GM10248 (cell line): ENCODE measurements at regions of chr6 and their contacts with region 1.

Region 1: DNA sequence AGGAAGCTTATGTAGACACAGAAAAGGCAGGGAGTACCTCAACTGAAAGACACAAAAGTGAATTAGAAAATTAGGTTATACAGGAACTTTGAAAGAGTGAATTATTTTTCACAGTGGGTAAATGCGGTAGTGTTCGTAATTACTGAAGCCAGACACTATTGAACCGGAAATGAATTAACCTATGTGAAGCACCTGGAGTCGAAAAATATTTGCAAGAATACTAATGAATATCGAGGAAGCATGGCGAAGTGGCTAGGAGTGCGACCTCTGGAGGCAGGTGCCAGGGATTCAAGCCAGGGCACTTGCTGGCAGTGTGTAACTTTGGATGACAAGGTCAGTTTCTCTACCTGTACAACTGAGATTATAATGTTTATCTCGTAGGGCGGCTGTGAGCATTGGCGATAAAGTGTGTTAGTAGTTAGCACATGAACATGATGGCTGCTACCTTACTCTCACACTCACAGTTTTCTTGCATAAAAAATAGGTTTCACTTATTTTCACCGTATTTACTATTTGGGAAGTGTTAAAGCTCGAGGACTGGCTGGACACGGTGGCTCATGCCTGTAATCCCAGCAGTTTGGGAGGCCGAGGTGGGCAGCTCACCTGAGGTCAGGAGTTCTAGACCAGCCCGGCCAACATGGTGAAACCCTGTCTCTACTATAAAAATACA is 567 bp upstream of the SLC18B1 start:
- DNase-seq: peak; percentile 75
- CTCF ChIP-seq: peak; percentile 69

Region 2: GRCh38 chr6:132669690-132670291 is 129.2 kb before region 1 on chr6:
- CTCF ChIA-PET with region 1: interaction called, 31 read pairs
- POLR2A ChIA-PET with region 1: no interaction called
- DNase-seq: peak; percentile 29
- CTCF ChIP-seq: peak; percentile 36

Region 3: GRCh38 chr6:132780770-132781371 is 18.1 kb before region 1 on chr6:
- CTCF ChIA-PET with region 1: interaction called, 16 read pairs
- POLR2A ChIA-PET with region 1: no interaction called
- DNase-seq: no peak
- CTCF ChIP-seq: no peak

Region 4: DNA sequence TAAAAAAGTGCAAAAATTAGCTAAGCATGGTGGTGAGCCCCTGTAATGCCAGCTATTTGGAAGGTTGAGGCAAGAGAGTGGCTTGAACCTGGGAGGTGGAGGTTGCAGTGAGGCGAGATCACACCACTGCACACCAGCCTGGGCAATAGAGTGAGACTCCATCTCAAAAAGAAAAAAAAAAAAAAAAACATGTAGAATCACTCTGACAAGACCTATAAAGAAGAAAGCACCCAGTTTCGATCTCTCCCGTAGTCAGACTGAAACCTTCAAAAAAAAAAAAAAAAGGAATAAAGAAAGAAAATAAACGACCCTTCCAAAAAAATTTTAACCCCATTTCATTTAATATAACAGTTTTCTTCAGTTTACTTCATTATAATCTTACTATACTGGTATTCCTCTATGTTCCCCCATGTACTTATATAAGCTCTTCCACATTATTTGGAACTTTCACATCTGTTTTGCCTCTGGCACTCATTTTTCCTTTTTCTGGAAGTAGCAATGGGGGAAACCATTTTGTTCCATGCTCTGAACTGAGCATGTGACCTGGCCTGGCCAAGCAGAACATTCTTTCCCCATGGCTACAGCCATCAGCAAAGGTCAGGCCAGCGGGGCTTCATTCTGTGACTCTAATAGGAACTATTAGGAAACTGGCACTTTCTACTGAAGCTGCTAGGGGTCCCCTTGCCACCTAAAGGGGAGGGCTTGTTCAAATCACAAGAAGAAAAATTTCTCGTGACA is 10.2 kb before region 1 on chr6:
- CTCF ChIA-PET with region 1: interaction called, 16 read pairs
- POLR2A ChIA-PET with region 1: no interaction called
- DNase-seq: no peak
- CTCF ChIP-seq: no peak

Region 5: GRCh38 chr6:132813173-132813856 is 14.3 kb after region 1 on chr6:
- CTCF ChIA-PET with region 1: interaction called, 101 read pairs
- POLR2A ChIA-PET with region 1: interaction called, 4 read pairs
- DNase-seq: peak; percentile 43
- CTCF ChIP-seq: no peak

Region 6: GRCh38 chr6:132843316-132844043 is 44.5 kb after region 1 on chr6:
- CTCF ChIA-PET with region 1: no interaction called
- POLR2A ChIA-PET with region 1: no interaction called
- DNase-seq: no peak
- CTCF ChIP-seq: no peak

Region 7: DNA sequence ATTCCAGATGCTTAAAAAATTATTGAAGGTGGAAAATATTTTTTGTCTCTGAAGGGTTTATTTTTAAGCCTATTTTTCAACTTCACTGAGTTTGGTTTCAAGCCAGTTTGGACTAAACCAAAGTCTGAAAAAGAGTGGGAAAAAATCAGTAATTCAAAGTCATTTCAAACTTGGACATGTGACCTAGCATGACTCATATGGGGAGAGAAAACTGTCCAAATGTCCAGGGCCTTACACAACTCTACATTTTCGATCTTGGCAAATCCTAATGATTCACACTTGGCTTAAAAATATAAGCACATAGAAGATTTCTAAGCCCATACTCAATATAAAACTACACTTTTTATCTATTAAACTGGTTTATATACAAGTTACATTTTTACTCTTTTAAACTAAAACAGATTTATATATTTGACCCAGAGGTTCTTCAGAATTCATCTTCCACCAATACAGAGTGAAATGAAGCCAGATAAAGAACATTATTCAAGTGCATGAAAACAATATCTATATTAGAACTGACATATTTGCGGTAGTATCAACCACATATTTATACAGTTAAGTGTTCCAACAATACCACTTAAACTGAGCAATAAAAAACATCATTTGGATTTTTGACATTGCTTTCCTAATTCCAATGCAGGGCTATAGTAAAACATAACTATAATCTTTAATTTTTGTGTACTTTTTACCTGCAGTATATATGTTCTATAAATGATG is 979.6 kb after region 1 on chr6:
- CTCF ChIA-PET with region 1: no interaction called
- POLR2A ChIA-PET with region 1: no interaction called
- DNase-seq: no peak
- CTCF ChIP-seq: no peak